AG04450 (cell line): ENCODE measurements at regions of chr19 and their contacts with region 1.

Region 1: DNA sequence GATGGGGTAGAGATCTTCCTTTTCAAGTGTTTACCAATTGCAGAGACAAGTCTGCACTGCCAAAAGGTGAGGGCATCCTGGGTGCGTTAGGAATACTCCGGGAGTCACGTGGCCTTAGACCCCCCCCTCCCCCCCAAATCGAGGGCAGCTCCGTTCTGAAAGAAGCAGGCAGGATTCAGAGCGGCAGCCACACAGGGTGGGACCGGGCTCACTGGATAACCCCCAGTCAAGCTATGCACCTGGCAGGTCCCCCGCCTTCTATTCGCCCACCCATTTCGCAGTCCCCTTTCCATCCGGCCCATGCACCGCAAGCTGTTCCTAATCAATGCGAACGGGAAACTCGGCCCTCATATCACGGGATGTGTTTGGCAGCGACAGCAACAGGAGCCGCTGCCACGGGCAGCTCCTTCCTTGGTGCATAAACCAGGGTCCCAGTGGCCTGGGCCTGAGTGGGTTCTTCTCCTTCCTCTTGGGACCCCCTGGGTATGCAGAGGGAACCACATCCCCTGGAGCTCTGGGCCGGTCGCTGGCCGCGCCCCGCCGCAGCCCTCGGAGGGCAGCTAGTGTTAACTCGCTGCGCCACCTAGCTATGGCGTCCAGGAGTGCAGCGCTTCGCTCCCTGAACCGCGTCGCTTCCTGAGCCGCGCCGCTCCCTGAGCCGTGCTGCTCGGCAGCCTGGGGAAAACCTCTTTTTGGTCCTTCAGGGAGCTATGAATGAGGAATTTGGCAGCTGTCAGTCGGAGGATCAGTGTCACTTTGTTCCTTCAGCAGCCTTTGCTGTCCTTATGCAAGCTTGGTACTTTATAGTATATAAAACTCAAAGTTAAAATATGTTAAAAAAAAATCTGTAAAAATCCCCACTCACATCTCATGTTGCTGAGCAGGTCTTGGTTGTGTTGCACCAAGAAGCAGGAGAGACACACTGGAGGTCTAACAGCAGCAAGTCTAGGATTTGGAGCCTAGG is 41.4 kb downstream of the LYL1 start:
- DNase-seq: no peak
- H3K4me3 ChIP-seq: peak overlapping the region; percentile 36
- H3K27ac ChIP-seq: peak overlapping the region; percentile 61
- H3K27me3 ChIP-seq: no peaks in the 10 kb centered on the region
- CTCF ChIP-seq: peak; percentile 97

Region 2: DNA sequence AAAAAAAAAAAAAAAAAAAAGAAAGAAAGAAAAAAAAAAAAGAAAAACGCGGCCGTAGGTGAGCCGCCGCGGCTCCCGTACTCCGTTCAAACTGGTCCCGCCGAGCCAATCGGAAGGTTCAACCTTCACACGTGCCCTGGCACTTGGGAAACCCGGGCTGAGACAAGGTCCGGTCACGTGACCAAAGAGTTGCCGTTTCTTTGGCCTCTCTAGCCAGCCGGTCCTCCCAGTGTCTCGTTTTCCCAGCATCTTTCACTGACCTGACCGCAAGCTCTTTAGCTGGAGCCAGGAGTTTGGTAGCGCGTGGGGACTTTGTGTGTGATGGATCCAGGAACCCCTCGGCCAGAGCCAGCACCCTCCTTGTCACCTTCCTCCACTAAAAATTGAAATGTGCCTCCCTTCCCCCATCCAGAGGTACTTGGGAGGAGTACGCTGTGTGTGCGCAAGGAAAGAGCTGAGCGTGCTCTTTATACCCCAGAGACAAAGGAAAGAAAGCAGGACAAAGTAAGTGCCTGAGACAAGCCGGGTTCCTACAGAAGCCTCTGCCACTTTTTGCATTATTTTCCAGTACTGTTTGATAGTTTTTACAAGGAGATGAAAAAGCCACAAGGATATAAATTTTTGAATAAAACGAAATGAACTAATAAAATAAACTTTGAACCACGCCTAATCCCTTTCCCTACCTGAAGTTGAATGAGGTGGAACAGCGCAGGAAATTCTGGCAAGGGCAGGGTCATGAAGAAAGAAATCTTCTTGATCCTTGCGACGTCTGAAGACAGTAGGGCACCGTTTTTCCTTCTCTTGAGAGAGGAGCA is 338.5 kb before region 1 on chr19:
- CTCF ChIA-PET with region 1: no interaction called
- POLR2A ChIA-PET with region 1: no interaction called
- DNase-seq: peak; percentile 98
- H3K4me3 ChIP-seq: peak overlapping the region; percentile 83
- H3K27ac ChIP-seq: peak overlapping the region; percentile 82
- H3K27me3 ChIP-seq: no peaks in the 10 kb centered on the region
- CTCF ChIP-seq: no peak

Region 3: GRCh38 chr19:12965017-12965811 is 96.0 kb before region 1 on chr19:
- CTCF ChIA-PET with region 1: interaction called, 54 read pairs
- POLR2A ChIA-PET with region 1: no interaction called
- DNase-seq: no peak
- H3K4me3 ChIP-seq: peak overlapping the region; percentile 63
- H3K27ac ChIP-seq: no peak overlapping the region
- H3K27me3 ChIP-seq: no peaks in the 10 kb centered on the region
- CTCF ChIP-seq: peak; percentile 81

Region 4: GRCh38 chr19:12983542-12984142 is 77.6 kb before region 1 on chr19:
- CTCF ChIA-PET with region 1: interaction called, 86 read pairs
- POLR2A ChIA-PET with region 1: interaction called, 4 read pairs
- DNase-seq: peak; percentile 30
- H3K4me3 ChIP-seq: peak overlapping the region; percentile 50
- H3K27ac ChIP-seq: no peak overlapping the region
- H3K27me3 ChIP-seq: no peaks in the 10 kb centered on the region
- CTCF ChIP-seq: peak; percentile 76

Region 5: GRCh38 chr19:13006431-13007281 is 54.6 kb before region 1 on chr19:
- CTCF ChIA-PET with region 1: interaction called, 12 read pairs
- POLR2A ChIA-PET with region 1: interaction called, 4 read pairs
- DNase-seq: no peak
- H3K4me3 ChIP-seq: no peak overlapping the region
- H3K27ac ChIP-seq: no peak overlapping the region
- H3K27me3 ChIP-seq: no peaks in the 10 kb centered on the region
- CTCF ChIP-seq: no peak

Region 6: GRCh38 chr19:13022859-13023636 is 38.2 kb before region 1 on chr19:
- CTCF ChIA-PET with region 1: interaction called, 46 read pairs
- POLR2A ChIA-PET with region 1: interaction called, 20 read pairs
- DNase-seq: peak; percentile 92
- H3K4me3 ChIP-seq: peak overlapping the region; percentile 65
- H3K27ac ChIP-seq: peak overlapping the region; percentile 99
- H3K27me3 ChIP-seq: no peaks in the 10 kb centered on the region
- CTCF ChIP-seq: no peak

Region 7: DNA sequence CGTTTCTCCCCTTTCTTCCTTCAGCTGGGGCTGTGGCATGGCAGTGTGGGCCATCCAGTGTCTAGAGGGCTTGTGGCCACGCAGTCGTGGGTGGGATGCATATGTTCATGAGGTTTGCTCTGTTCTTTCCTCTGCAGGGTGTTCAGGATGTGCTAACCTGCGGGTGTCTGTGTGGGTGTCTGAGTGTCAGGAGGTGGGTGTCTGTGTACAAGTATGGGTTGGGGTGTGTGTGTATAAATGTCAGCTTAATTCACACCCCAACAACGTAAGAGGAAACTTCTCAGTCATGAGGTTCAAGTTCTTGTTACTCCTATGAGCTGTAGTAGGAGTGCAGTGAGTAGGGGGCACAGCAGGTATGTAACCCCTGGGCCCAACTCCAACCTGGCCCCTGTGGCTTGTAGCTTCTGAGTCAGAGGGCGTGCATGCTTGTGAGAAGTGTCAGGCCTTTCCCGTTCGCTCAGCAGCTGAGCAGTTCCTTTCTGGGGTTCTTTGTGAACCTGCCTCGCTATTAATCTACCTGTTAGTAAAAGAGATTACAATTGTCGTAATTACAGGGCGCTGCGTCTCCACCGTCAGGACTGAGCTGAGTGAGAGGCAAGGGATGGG is 16.9 kb before region 1 on chr19:
- CTCF ChIA-PET with region 1: interaction called, 11 read pairs
- POLR2A ChIA-PET with region 1: interaction called, 8 read pairs
- DNase-seq: no peak
- H3K4me3 ChIP-seq: no peak overlapping the region
- H3K27ac ChIP-seq: peak overlapping the region; percentile 52
- H3K27me3 ChIP-seq: no peaks in the 10 kb centered on the region
- CTCF ChIP-seq: no peak

Region 8: GRCh38 chr19:13093407-13094105 is 32.3 kb after region 1 on chr19:
- CTCF ChIA-PET with region 1: interaction called, 33 read pairs
- POLR2A ChIA-PET with region 1: interaction called, 3 read pairs
- DNase-seq: peak; percentile 60
- H3K4me3 ChIP-seq: no peak overlapping the region
- H3K27ac ChIP-seq: peak overlapping the region; percentile 21
- H3K27me3 ChIP-seq: no peaks in the 10 kb centered on the region
- CTCF ChIP-seq: peak; percentile 89

Region 9: DNA sequence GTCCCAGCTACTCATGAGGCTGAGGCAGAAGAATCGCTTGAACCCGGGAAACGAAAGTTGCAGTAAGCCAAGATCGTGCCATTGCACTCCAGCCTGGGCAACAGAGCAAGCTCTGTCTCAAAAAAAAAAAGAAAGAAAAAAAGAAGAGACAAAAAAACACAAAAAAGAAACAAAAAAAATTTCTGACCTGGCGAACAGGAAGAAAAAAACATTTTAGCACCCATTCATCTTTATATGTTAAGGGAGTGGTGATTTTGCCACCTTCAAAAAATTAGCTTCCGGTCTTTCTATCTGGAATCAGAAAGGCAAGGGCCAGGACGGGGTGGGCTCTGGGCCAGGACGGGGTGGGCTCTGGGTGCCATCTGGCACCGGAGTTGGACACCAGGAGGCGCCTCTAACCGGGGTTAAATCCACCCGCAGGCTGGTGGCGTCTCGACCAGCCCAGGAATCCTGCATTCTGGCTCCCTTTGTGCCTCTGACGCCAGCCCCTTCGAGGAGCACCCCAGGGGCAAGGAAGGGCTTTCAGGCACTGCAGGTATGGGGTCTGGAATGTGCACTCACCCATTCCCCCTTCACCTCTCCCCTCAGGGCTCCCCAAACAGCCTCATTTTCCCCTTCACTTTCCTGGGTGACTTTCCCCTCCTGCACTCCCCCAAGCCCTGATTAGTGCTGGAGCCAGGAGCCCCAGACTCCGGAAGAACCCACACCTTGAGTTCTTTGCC is 723.6 kb after region 1 on chr19:
- CTCF ChIA-PET with region 1: no interaction called
- POLR2A ChIA-PET with region 1: no interaction called
- DNase-seq: no peak
- H3K4me3 ChIP-seq: no peak overlapping the region
- H3K27ac ChIP-seq: no peak overlapping the region
- H3K27me3 ChIP-seq: no peaks in the 10 kb centered on the region
- CTCF ChIP-seq: peak; percentile 72